Naive thymus-derived CD4-positive, alpha-beta T cell (primary cell): ENCODE measurements at regions of chr17 and their contacts with region 1.

Region 1: GRCh38 chr17:28763804-28764266 is 20.0 kb downstream of the TRAF4 start:
- DNase-seq: peak in 8 of 9 donors; percentile 63 to 82 (median 76)
- ATAC-seq: peak; percentile 95
- H3K4me3 ChIP-seq: no peak overlapping the region
- H3K4me3 Mint-ChIP-seq: no peak overlapping the region
- H3K27ac ChIP-seq: no peak overlapping the region
- H3K27ac Mint-ChIP-seq: peak overlapping the region in 5 of 9 donors; percentile 6 to 93 (median 75)
- H3K4me1 ChIP-seq: no peaks in the 10 kb centered on the region
- H3K4me1 Mint-ChIP-seq: peaks cover 4 to 16% (median 6%) of the 10 kb centered on the region in 7 donors
- H3K27me3 ChIP-seq: no peaks in the 10 kb centered on the region
- H3K27me3 Mint-ChIP-seq: no peaks in the 10 kb centered on the region

Region 2: GRCh38 chr17:28655160-28655840 is 108.5 kb before region 1 on chr17:
- CTCF ChIA-PET with region 1: no interaction called
- POLR2A ChIA-PET with region 1: no interaction called
- intact Hi-C with region 1: no loop called
- DNase-seq: no peak
- ATAC-seq: no peak
- H3K4me3 ChIP-seq: no peak overlapping the region
- H3K4me3 Mint-ChIP-seq: no peak overlapping the region
- H3K27ac ChIP-seq: no peak overlapping the region
- H3K27ac Mint-ChIP-seq: peak overlapping the region in 1 of 9 donors; percentile 89
- H3K4me1 ChIP-seq: peaks cover 0 to 2% of the 10 kb centered on the region in 2 donors
- H3K4me1 Mint-ChIP-seq: peaks cover 7 to 34% (median 24%) of the 10 kb centered on the region in 7 donors
- H3K27me3 ChIP-seq: no peaks in the 10 kb centered on the region
- H3K27me3 Mint-ChIP-seq: no peaks in the 10 kb centered on the region

Region 3: DNA sequence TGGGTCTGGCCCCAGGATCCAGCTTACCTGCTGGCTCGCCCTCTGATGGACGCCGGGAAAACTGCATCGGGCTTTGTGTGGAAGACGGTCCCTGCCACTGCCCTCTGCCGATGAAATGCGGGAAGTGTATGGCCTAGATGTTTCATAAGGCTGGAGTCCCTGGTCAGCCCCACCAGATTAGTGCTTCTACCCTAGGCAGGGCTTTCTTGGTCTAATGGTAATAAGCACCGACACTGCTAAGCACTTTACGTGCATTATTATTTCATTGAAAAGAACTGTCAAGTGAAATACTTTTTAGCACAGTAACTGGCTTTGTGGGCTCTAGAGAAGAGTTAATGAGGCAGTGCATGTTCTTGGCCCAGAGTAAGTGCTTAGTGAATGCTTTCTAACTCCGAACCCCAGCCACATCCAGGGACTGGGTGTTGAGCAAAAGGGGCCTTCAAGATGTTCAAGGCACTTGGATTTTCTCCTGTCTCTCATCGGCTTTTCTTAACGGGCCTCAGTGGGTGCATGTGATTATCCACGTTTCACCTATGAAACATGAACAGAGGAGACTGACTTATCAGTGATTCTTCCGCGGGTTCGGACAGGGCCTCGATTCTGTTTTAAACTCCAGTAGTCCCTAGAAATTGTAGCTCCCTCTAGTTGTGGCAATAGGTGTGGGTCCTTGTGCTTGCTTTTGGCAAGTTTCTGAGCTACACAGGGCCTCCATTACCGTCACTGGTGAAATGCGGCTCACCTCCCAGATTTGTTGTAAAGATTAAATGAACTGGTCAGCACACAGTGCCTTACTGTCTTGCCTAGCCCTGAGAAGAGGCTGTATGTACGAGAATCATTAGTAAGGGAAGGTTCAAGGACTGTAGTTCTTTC is 13.4 kb before region 1 on chr17:
- CTCF ChIA-PET with region 1: interaction called, 10 read pairs
- POLR2A ChIA-PET with region 1: interaction called, 3 read pairs
- intact Hi-C with region 1: no loop called
- DNase-seq: peak; percentile 73 to 87 (median 82)
- ATAC-seq: peak; percentile 96
- H3K4me3 ChIP-seq: no peak overlapping the region
- H3K4me3 Mint-ChIP-seq: peak overlapping the region in 1 of 10 donors; percentile 51
- H3K27ac ChIP-seq: peak overlapping the region; percentile 2
- H3K27ac Mint-ChIP-seq: peak overlapping the region in 4 of 9 donors; percentile 11 to 52 (median 38)
- H3K4me1 ChIP-seq: peaks cover 6 to 14% of the 10 kb centered on the region in 2 donors
- H3K4me1 Mint-ChIP-seq: peaks cover 0 to 29% (median 15%) of the 10 kb centered on the region in 7 donors
- H3K27me3 ChIP-seq: no peaks in the 10 kb centered on the region
- H3K27me3 Mint-ChIP-seq: no peaks in the 10 kb centered on the region

Region 4: DNA sequence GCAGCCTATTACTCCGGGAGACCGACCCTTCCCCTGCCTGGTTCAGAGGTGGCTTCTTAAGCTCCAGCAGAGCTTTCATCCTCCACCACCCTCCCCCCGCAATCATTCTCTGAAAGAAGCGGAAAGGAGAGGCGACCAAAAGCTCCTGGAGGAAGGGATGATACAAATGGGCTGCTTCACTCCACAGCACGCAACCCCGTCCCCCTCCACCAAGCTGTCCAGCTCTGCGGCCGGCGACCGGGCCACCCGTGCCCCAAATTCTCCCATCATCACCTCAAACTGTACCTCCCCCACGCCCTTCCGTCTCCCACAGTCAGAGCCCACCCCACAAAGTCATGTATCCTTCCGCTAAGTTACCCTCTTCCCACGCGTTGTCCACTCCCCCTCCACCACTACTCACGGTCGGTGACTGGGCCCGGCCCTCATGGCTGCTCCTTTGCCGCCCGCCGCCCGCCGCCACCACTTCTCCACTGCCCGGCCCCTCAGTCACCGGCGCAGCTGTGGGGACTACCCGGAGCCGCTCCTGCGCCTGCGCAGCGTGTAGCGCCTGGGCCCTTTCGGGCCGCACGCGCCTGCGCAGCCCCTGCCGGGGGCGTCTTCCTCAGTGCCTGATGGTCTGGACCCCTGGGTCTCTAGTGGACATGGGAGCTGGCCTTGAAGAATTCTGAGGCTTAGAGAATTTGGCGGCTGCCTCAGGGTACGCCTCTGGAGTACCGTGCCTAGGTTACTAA is 78.6 kb after region 1 on chr17 and contains the start of gene FAM222B:
- CTCF ChIA-PET with region 1: interaction called, 7 read pairs
- POLR2A ChIA-PET with region 1: interaction called, 3 read pairs
- intact Hi-C with region 1: loop called (anchors 1 to 2 kb)
- DNase-seq: peak; percentile 80 to 91 (median 86)
- ATAC-seq: peak; percentile 98
- H3K4me3 ChIP-seq: peak within 1 kb of the TSS; percentile 77
- H3K4me3 Mint-ChIP-seq: peak within 1 kb of the TSS; percentile 96 to 100 (median 98)
- H3K27ac ChIP-seq: peak within 1 kb of the TSS; percentile 78
- H3K27ac Mint-ChIP-seq: peak within 1 kb of the TSS; percentile 83 to 97 (median 92)
- H3K4me1 ChIP-seq: peaks cover 8 to 13% of the 10 kb centered on the region in 2 donors
- H3K4me1 Mint-ChIP-seq: peaks cover 6 to 31% (median 26%) of the 10 kb centered on the region in 7 donors
- H3K27me3 ChIP-seq: no peaks in the 10 kb centered on the region
- H3K27me3 Mint-ChIP-seq: no peaks in the 10 kb centered on the region
- total RNA-seq, gene FAM222B: 16.5 to 24.4 (median 22.3) TPM

Region 5: GRCh38 chr17:28892024-28892423 is 128.2 kb after region 1 on chr17:
- CTCF ChIA-PET with region 1: interaction called, 13 read pairs
- POLR2A ChIA-PET with region 1: interaction called, 12 read pairs
- intact Hi-C with region 1: loop called in 1 of 2 experiments (anchors 1 kb)
- DNase-seq: no peak
- ATAC-seq: no peak
- H3K4me3 ChIP-seq: no peak overlapping the region
- H3K4me3 Mint-ChIP-seq: peak overlapping the region in 8 of 10 donors; percentile 25 to 62 (median 42)
- H3K27ac ChIP-seq: peak overlapping the region; percentile 78
- H3K27ac Mint-ChIP-seq: peak overlapping the region; percentile 74 to 99 (median 92)
- H3K4me1 ChIP-seq: peaks cover 17 to 34% of the 10 kb centered on the region in 2 donors
- H3K4me1 Mint-ChIP-seq: peaks cover 32 to 81% (median 62%) of the 10 kb centered on the region in 7 donors
- H3K27me3 ChIP-seq: no peaks in the 10 kb centered on the region
- H3K27me3 Mint-ChIP-seq: no peaks in the 10 kb centered on the region

Region 6: GRCh38 chr17:28902819-28903545 is 139.1 kb after region 1 on chr17 and contains the start of gene DHRS13:
- CTCF ChIA-PET with region 1: interaction called, 30 read pairs
- POLR2A ChIA-PET with region 1: interaction called, 13 read pairs
- intact Hi-C with region 1: loop called (anchors 1 kb)
- DNase-seq: peak; percentile 92 to 99 (median 96)
- ATAC-seq: peak; percentile 96
- H3K4me3 ChIP-seq: peak within 1 kb of the TSS; percentile 77
- H3K4me3 Mint-ChIP-seq: peak within 1 kb of the TSS; percentile 85 to 98 (median 94)
- H3K27ac ChIP-seq: peak within 1 kb of the TSS; percentile 87
- H3K27ac Mint-ChIP-seq: peak within 1 kb of the TSS; percentile 81 to 96 (median 90)
- H3K4me1 ChIP-seq: peaks cover 18 to 29% of the 10 kb centered on the region in 2 donors
- H3K4me1 Mint-ChIP-seq: peaks cover 13 to 53% (median 36%) of the 10 kb centered on the region in 7 donors
- H3K27me3 ChIP-seq: no peaks in the 10 kb centered on the region
- H3K27me3 Mint-ChIP-seq: no peaks in the 10 kb centered on the region
- total RNA-seq, gene DHRS13: 20.0 to 51.3 (median 30.4) TPM

Region 7: DNA sequence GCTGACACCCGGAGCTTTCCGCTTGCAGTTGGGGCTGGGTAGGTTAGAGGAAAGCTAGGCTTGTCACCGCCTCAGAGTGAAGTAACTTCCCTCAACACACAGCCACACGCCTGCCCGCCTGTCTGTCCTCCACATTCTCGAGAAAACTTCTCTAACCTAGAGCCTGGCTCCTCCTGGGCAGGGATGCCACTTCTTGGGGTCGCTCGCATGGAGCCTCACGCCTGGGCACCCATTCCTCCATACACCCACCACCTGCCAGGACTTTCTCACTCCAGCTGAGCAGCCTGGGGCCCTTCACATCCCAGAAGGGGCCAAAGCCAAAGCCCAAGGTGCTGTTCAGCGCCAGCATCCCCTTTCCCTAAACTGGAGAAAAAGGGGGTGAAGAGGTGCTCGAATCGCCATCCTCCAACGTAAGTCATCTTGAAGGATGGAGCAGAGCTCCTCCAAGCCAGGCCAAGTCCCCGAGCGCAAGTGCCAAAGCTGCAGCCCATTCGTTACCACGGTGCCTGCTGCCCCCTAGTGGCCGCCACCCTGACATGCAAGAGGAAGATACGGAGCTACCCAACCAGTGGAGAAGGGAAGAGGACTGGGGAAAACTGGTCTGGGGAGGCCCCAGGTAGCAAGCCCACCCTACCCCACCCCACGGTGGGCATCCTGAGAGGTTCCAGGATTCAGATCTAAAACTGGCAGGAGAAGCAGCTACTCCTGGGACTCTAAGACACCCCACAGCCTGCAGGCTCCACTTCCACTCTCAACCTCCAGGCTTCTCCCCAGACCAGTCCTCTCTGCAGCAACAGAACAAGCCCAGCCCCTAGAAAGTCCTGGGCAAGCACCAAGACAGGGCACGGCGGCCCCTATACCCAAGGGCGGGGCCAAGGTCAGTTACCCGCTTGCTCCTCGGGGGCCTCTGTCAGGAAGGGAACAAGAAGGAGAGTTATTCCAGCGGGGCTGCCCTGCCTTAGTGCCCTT is 353.3 kb after region 1 on chr17:
- CTCF ChIA-PET with region 1: interaction called, 3 read pairs
- POLR2A ChIA-PET with region 1: no interaction called
- intact Hi-C with region 1: loop called in 1 of 2 experiments (anchors 2 kb)
- DNase-seq: peak; percentile 49 to 81 (median 69)
- ATAC-seq: peak; percentile 89
- H3K4me3 ChIP-seq: no peak overlapping the region
- H3K4me3 Mint-ChIP-seq: peak overlapping the region in 1 of 10 donors; percentile 44
- H3K27ac ChIP-seq: no peak overlapping the region
- H3K27ac Mint-ChIP-seq: peak overlapping the region in 5 of 9 donors; percentile 54 to 74 (median 61)
- H3K4me1 ChIP-seq: no peaks in the 10 kb centered on the region
- H3K4me1 Mint-ChIP-seq: peaks cover 0 to 11% (median 5%) of the 10 kb centered on the region in 7 donors
- H3K27me3 ChIP-seq: no peaks in the 10 kb centered on the region
- H3K27me3 Mint-ChIP-seq: no peaks in the 10 kb centered on the region

Region 8: DNA sequence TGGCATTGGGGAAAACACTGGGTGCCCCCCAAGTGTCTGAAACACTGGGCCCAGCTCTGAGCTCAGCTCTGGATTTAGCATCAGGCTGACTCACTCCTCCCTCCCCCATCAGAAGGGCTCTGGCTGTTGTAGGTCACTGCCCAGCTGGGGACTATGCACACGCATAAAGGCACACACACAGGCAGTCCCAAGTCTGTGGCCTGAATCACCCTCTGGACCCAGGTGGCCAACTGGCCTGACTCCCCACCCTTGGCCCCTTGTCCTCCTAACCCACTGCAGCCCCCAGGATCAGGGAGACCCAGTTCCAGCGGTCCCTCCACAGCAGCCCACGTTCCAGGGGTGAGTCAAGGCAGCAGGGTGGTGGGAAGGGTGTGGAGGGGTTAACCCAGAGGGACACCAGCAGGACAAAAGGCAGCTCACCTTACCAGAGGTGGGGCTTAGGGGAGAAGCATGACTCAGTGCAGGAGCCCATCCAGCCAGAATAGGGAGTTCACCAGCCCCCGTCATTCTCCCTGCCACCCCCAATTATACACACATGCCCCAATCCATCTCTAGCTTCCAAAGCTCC is 369.4 kb after region 1 on chr17:
- CTCF ChIA-PET with region 1: no interaction called
- POLR2A ChIA-PET with region 1: no interaction called
- intact Hi-C with region 1: no loop called
- DNase-seq: no peak
- ATAC-seq: peak; percentile 42
- H3K4me3 ChIP-seq: no peak overlapping the region
- H3K4me3 Mint-ChIP-seq: no peak overlapping the region
- H3K27ac ChIP-seq: no peak overlapping the region
- H3K27ac Mint-ChIP-seq: peak overlapping the region in 1 of 9 donors; percentile 21
- H3K4me1 ChIP-seq: peaks cover 14% of the 10 kb centered on the region in 2 donors
- H3K4me1 Mint-ChIP-seq: peaks cover 38 to 63% (median 53%) of the 10 kb centered on the region in 7 donors
- H3K27me3 ChIP-seq: no peaks in the 10 kb centered on the region
- H3K27me3 Mint-ChIP-seq: no peaks in the 10 kb centered on the region

Region 9: GRCh38 chr17:29789196-29790170 is 1025.6 kb after region 1 on chr17:
- CTCF ChIA-PET with region 1: no interaction called
- POLR2A ChIA-PET with region 1: no interaction called
- intact Hi-C with region 1: no loop called
- DNase-seq: no peak
- ATAC-seq: no peak
- H3K4me3 ChIP-seq: no peak overlapping the region
- H3K4me3 Mint-ChIP-seq: no peak overlapping the region
- H3K27ac ChIP-seq: no peak overlapping the region
- H3K27ac Mint-ChIP-seq: peak overlapping the region in 3 of 9 donors; percentile 11 to 38 (median 28)
- H3K4me1 ChIP-seq: no peaks in the 10 kb centered on the region
- H3K4me1 Mint-ChIP-seq: peaks cover 0 to 5% (median 0%) of the 10 kb centered on the region in 7 donors
- H3K27me3 ChIP-seq: no peaks in the 10 kb centered on the region
- H3K27me3 Mint-ChIP-seq: no peaks in the 10 kb centered on the region